ENCODE measurements at regions of chr18 and their contacts with region 1.

Region 1: GRCh38 chr18:8654503-8655451 is 45.5 kb downstream of the RAB12 start:
- DNase-seq: no peak
- H3K4me3 ChIP-seq: no peak overlapping the region
- CTCF ChIP-seq: peak; percentile 30

Region 2: GRCh38 chr18:8632386-8632785 is 22.4 kb before region 1 on chr18:
- CTCF ChIA-PET with region 1: interaction called, 11 read pairs
- POLR2A ChIA-PET with region 1: interaction called, 3 read pairs
- DNase-seq: no peak
- H3K4me3 ChIP-seq: no peak overlapping the region
- CTCF ChIP-seq: no peak

Region 3: GRCh38 chr18:8643326-8643878 is 11.4 kb before region 1 on chr18:
- CTCF ChIA-PET with region 1: interaction called, 15 read pairs
- POLR2A ChIA-PET with region 1: no interaction called
- DNase-seq: no peak
- H3K4me3 ChIP-seq: no peak overlapping the region
- CTCF ChIP-seq: no peak

Region 4: GRCh38 chr18:8667846-8668245 is 13.1 kb after region 1 on chr18:
- CTCF ChIA-PET with region 1: interaction called, 15 read pairs
- POLR2A ChIA-PET with region 1: no interaction called
- DNase-seq: peak; percentile 36
- H3K4me3 ChIP-seq: no peak overlapping the region
- CTCF ChIP-seq: no peak

Region 5: DNA sequence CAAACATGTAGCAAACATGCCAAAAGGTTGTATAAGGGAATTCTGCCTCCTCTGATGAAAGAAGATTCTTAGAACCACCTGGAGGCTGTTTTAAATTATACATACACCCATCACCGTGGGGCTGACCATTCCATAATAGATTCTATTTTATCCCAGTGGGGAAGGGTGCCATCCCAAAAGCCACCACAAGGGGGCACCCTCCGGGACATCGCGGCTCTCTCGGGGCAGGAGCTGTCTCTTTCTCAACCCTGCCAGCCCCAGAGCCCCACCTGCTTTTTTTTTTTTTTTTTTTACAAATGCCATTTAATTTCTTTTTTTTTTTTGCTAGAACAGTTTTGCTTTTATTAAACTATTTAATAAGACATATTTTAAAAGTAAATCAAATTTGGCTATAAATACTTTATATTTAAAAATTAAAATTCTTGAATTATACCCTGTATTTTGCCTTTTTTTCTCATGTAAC is 42.0 kb after region 1 on chr18:
- CTCF ChIA-PET with region 1: interaction called, 25 read pairs
- POLR2A ChIA-PET with region 1: no interaction called
- DNase-seq: no peak
- H3K4me3 ChIP-seq: no peak overlapping the region
- CTCF ChIP-seq: peak; percentile 88

Region 6: DNA sequence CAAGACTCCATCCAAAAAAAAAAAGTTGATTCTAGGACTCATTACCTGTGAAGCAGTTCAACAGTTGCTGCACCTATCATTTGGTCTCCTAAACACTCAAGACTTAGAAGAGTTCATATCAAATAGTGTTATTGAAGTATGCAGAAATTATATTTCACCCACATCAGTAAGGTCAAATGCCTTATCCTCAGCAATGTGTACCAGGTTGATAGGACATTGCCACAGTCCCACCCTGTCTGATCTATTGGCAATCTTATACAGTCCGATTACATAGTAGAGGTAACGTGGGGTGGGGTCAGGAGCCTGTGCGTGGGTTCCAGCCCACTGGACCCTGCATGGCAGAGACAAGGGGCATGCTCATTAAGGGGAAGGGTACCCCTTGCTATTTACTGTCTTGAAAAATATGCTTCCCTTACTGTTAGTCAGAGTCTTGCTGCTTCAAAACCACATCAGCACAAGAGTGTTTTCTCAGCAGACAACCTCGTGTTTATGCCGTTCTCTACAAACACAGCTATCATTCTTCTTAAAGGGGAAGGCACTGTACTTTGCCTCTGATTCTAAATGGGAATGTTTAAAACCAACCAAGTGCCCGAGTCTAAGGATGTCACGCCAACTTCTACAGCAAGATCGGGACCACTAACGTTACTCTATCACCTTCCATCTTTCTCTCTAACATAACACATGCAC is 165.8 kb after region 1 on chr18:
- CTCF ChIA-PET with region 1: no interaction called
- POLR2A ChIA-PET with region 1: no interaction called
- DNase-seq: no peak
- H3K4me3 ChIP-seq: no peak overlapping the region
- CTCF ChIP-seq: no peak

Region 7: DNA sequence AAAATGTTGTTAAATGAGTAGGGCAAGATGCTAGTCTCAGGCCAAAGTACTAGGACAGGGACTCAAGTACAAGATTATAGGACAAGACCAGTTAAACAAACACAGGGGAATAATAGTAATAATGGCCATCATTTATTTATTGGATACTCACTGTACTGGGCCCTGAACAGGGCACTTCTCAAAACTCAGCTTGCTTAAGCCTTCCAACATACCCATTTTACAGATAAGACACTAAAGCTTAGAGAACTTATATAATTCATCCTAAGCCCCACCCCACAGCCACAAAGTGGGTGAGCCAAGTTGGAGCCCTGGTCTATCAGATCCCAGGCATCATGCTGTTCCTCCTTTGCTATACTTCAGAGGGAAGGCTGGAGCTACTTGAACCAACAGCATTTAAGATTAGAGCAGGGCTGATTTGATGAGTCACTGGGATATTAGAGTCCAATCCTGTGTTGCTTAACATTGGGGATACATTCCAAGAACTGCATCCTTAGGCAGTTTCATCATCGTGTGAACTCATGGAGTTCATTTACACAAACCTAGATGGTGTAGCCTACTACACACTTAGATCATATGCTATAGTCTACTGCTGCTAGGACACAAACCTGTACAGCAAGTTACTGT is 204.2 kb after region 1 on chr18:
- CTCF ChIA-PET with region 1: no interaction called
- POLR2A ChIA-PET with region 1: no interaction called
- DNase-seq: peak; percentile 90
- H3K4me3 ChIP-seq: no peak overlapping the region
- CTCF ChIP-seq: no peak

Region 8: DNA sequence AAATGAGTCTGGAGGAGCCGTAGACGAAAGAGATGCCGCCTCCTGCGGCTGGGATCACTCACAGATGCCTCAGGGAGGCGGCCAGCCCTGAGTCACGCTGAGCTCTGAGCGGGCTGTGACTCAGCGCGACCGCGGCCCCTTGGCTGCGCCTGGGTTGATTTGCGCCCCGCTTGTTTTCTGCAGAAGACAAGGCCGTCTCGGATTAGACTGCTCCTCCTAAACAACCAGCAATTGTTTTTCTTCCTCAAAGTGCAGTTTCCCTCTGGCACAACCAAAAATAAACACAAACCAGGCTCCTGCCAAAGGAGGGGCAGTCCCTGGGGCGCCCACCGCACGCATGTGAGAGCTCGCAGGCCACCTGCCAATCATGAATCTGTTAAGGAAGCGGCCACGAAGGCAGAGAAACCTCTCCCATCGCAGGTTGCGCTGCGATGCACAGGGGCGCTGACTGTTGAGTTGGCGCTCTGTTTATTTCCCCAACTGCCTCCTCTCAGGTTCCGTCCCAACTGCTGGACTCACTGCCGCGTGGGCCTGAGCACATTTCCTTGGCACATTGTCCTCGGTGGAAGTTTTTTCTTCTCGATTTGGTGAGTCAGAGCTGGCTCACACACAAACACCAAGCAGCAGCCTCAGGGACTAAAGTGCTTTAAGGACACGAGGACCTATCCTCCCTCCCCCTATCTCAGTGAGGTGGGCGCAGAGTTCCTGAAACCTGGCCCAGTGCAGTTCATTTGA is 362.6 kb after region 1 on chr18:
- CTCF ChIA-PET with region 1: interaction called, 11 read pairs
- POLR2A ChIA-PET with region 1: no interaction called
- DNase-seq: no peak
- H3K4me3 ChIP-seq: peak overlapping the region; percentile 13; the same call in 1 of the 2 replicates
- CTCF ChIP-seq: no peak

Region 9: DNA sequence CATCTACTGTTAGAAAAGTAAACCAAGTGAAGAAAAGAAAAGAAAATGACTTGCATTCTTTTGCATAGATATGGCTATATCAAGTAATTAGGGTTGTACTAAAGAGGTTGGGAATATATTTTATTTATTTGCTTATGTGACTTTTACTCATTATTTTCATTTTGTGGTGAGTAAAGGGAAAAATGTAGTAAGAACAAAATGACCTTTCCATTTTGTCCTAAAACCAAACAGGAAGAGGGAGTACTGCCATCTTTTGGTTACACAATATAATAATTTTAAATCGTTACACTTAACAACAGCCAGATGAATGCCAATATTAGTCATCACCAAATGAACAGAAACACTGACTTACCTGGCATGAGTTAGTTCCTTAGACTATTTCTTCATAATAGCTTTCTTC is 400.4 kb after region 1 on chr18:
- CTCF ChIA-PET with region 1: interaction called, 31 read pairs
- POLR2A ChIA-PET with region 1: no interaction called
- DNase-seq: peak; percentile 42
- H3K4me3 ChIP-seq: no peak overlapping the region
- CTCF ChIP-seq: no peak

Measured in AG04449 (cell line).